BJ (cell line): ENCODE measurements at regions of chr6 and their contacts with region 1.

Region 1: GRCh38 chr6:163970846-163971564 is 556.5 kb downstream of the QKI start:
- DNase-seq: no peak
- H3K4me3 ChIP-seq: no peak overlapping the region
- H3K27me3 ChIP-seq: no peaks in the 10 kb centered on the region
- CTCF ChIP-seq: no peak

Region 2: GRCh38 chr6:163572612-163573011 is 398.4 kb before region 1 on chr6:
- CTCF ChIA-PET with region 1: no interaction called
- POLR2A ChIA-PET with region 1: interaction called, 11 read pairs
- DNase-seq: no peak
- H3K4me3 ChIP-seq: no peak overlapping the region
- H3K27me3 ChIP-seq: no peaks in the 10 kb centered on the region
- CTCF ChIP-seq: no peak